Activated CD8-positive, alpha-beta memory T cell treated with anti-CD3 and anti-CD28 coated beads, Interleukin-2, amount 10 ng/mL, durations not matched to agents 7 days and 5 days (primary cell): ENCODE measurements at regions of chr14 and their contacts with region 1.

Region 1: DNA sequence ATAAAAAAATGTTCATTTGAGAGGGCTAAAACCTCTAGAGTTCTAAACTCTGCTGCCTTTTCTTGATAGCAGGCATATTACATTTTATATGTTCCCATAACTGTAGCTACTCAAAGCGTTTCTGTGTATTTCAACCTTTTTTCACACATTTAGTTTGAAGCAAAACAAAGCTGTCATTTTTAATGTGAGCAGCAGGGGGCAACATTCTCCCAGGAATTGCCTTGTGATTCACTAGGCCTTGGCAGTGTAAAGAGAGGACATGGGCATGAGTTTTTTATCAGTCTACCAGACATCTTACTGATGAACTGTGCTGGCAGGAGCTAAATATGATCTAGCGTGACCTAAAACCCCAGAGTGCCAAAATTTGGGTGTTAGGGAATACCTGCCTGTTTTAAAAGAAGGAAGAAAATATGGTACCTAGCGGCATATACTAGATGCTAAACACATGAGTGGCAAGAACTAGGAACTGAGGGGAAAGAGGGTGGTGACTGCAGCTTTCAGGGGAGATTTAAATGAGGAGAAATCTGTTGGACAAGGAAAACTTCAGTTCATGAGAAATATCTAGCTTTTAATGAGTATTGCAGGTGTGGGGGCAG is 65.3 kb downstream of the IFT43 start:
- DNase-seq: peak; percentile 65
- ATAC-seq: no peak
- H3K4me3 Mint-ChIP-seq: no peak overlapping the region
- H3K27ac Mint-ChIP-seq: no peak overlapping the region
- H3K4me1 Mint-ChIP-seq: no peaks in the 10 kb centered on the region
- H3K27me3 Mint-ChIP-seq: no peaks in the 10 kb centered on the region

Region 2: DNA sequence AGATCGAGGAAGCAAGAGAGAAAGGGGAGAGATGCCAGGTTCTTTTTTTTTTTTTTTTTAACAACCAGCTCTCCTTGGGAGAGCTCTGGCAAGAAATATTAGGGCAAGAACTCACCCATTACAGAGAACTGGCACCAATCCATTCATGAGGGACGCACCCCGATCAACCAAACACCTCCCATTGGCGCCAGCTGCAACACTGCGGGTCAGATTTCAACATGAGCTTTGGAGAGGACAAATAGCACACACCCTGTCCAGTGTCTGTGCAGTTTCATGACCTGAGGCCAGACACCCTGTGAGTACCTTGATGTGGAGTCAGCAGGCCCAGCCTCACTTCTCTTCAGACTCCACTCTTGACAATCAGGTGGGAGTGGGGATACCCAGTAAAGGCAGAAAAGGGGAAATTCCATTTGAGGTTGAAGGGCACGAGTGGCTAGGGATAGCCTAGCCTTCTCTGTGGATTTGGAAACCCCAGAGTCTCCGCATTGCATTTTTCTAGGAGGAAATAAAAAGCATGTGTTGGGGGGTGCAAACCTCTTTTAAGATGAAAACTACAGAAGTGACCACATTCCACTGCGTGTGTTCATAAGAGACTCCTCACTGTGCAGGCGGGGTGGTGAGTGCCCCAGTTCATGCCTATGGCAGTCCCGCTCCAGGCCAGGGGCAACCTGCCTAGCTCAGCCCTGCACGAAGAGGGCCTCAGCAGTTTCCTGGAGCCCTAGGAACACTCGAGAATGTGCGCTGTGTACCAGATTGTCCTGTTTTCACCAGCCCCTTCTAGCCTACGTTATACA is 58.4 kb after region 1 on chr14:
- CTCF ChIA-PET with region 1: no interaction called
- DNase-seq: no peak
- ATAC-seq: no peak
- H3K4me3 Mint-ChIP-seq: no peak overlapping the region
- H3K27ac Mint-ChIP-seq: no peak overlapping the region
- H3K4me1 Mint-ChIP-seq: no peaks in the 10 kb centered on the region
- H3K27me3 Mint-ChIP-seq: no peaks in the 10 kb centered on the region

Region 3: GRCh38 chr14:76352639-76353281 is 301.9 kb after region 1 on chr14:
- CTCF ChIA-PET with region 1: interaction called, 82 read pairs
- DNase-seq: peak; percentile 56
- ATAC-seq: peak; percentile 81
- H3K4me3 Mint-ChIP-seq: no peak overlapping the region
- H3K27ac Mint-ChIP-seq: no peak overlapping the region
- H3K4me1 Mint-ChIP-seq: peaks cover 4% of the 10 kb centered on the region
- H3K27me3 Mint-ChIP-seq: peaks cover 28% of the 10 kb centered on the region

Region 4: DNA sequence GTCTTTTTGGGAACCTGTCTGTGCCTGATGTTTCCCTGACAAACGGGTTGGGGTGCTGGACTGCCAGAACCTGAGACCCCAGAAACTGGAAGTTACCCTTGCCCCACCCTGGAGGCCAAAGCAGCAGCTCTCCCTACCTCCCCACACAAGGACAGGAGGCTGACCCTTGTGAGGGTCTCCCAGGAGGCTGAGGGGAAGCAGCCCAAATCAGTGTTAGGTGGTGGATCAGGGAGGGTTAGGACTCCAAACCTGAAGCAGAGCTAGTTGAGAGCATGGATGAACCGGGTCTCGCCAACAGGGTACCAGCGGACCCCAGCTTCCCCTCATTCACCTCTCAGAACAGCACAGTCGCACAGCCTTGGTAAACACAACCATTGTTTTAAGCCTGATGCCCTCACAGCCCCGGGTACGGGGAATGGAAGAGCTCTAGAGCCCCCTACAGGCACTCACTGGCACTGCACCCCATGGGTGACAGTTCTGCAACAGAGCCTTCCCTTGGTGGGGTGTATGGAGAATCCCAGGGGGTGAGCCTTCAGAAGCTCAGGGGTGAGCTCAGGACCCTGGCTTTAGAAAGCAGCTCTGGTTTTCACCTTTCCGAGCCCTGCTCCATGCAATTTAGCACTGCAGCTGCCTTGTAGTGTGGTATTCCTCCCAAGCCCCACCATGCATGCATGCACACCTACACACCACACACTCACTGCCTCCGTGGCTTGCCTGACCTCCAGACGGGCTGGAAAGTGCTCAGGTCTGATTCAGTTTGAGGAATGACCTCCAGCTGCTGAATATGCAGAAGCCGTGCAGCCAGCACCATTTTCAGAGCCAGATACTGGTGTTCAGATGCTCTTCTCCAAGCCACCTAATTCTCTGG is 336.3 kb after region 1 on chr14:
- CTCF ChIA-PET with region 1: interaction called, 30 read pairs
- DNase-seq: peak; percentile 74
- ATAC-seq: peak; percentile 81
- H3K4me3 Mint-ChIP-seq: no peak overlapping the region
- H3K27ac Mint-ChIP-seq: no peak overlapping the region
- H3K4me1 Mint-ChIP-seq: peaks cover 3% of the 10 kb centered on the region
- H3K27me3 Mint-ChIP-seq: peaks cover 41% of the 10 kb centered on the region